Motor neuron (in vitro differentiated cells): ENCODE measurements at regions of chr7 and their contacts with region 1.

Region 1: GRCh38 chr7:137592232-137592896 is 248.8 kb upstream of the PTN start:
- ATAC-seq: peak; percentile 80 to 94 (median 86)
- H3K4me3 ChIP-seq: no peak overlapping the region
- H3K27ac ChIP-seq: no peak overlapping the region
- H3K4me1 ChIP-seq: peaks cover 0 to 27% of the 10 kb centered on the region in 2 donors

Region 2: DNA sequence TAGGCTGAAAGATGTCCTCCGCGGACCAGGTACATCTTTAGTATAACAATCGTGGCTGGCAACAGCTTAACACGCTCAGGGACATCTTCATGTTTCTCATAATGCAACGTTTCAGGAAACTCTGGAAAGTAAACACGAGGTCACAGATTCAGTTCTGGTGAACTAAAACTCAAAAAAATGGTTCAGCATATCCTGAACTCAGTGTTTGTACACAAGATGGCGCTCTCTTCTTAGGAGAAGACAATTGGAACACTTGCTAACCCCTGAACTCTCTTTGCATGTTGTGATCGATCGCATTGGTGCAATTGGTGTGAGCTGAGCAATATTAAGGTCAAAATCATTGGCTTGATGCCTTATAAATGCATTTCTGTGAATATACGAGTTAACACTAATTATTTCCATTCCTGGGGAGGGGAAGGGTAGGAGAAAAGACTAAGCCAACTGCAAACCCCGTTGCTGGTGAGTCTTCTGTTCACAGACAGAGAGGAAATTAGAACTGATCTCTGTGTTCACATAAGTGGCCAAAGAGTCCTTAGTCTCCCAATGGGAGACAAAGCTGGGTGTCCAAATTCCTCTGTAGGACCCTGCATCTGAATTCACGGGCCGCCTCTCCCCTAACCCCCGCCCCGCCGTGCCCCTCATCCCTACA is 1791.2 kb before region 1 on chr7:
- in situ Hi-C with region 1: loop called in 1 of 9 experiments (anchors 25 kb)
- ATAC-seq: peak; percentile 47 to 84 (median 76)
- H3K4me3 ChIP-seq: no peak overlapping the region
- H3K27ac ChIP-seq: no peak overlapping the region
- H3K4me1 ChIP-seq: peaks cover 0 to 2% of the 10 kb centered on the region in 2 donors

Region 3: DNA sequence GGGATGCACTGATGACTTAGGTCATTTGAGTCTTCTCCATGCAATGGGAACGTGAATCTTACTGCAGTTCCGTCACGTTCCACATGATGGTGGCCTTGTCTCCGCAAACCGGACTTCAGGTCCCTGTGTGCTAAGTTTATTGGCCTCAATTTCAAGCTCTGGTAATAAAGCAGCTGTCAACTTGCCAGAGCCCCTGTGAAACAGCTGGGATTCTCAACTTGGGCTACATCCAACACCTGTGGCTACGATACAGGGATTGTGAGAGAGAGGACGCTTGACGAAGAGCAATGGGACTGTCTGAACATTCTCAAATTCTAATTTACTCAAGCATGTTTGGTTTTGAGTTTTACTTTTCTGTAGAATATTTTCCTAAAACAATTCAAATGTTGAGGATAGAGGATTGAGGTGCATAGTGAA is 423.1 kb before region 1 on chr7:
- in situ Hi-C with region 1: loop called in 1 of 9 experiments (anchors 10 kb)
- ATAC-seq: peak; percentile 32 to 88 (median 62)
- H3K4me3 ChIP-seq: no peak overlapping the region
- H3K27ac ChIP-seq: no peak overlapping the region
- H3K4me1 ChIP-seq: peaks cover 0 to 9% of the 10 kb centered on the region in 2 donors

Region 4: GRCh38 chr7:137287651-137288258 is 304.6 kb before region 1 on chr7:
- in situ Hi-C with region 1: loop called in 1 of 9 experiments (anchors 25 kb)
- ATAC-seq: no peak
- H3K4me3 ChIP-seq: no peak overlapping the region
- H3K27ac ChIP-seq: no peak overlapping the region
- H3K4me1 ChIP-seq: no peaks in the 10 kb centered on the region

Region 5: GRCh38 chr7:137454246-137454724 is 138.1 kb before region 1 on chr7:
- in situ Hi-C with region 1: loop called in 1 of 9 experiments (anchors 25 kb)
- ATAC-seq: peak in 5 of 8 experiments; percentile 39 to 66 (median 44)
- H3K4me3 ChIP-seq: no peak overlapping the region
- H3K27ac ChIP-seq: no peak overlapping the region
- H3K4me1 ChIP-seq: no peaks in the 10 kb centered on the region

Region 6: DNA sequence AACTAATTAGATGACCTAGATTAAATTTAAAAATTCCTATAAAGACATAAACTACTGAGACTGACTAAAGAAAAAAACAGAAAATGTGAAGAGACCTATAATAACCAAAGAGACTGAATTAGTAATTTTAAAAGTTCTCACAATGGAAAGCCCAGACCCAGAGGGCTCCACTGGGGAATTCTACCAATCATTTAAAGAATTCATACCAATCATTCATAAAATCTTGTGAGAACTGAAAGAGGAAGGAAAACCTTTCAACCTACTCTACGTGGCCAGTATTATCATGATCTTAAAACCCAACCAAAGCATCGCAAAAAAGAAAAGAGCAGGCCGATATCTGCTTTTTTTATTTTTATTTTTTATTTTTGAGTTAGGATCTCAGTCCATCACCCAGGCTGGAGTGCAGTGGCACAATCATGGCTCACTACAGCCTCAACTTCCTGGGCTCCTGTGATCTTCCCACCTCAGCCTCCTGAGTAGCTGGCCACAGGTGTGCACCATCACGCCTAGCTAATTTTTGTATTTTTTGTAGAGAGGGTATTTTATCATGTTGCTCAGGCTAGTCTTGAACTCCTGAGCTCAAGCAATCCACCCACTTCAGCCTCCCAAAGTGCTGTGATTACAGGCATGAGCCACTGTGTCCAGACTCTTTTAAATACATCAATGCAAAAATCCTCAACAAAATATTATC is 205.9 kb after region 1 on chr7:
- in situ Hi-C with region 1: no loop called
- ATAC-seq: no peak
- H3K4me3 ChIP-seq: no peak overlapping the region
- H3K27ac ChIP-seq: no peak overlapping the region
- H3K4me1 ChIP-seq: peaks cover 0 to 4% of the 10 kb centered on the region in 2 donors